GM23248 (cell line): ENCODE measurements at regions of chr18 and their contacts with region 1.

Region 1: DNA sequence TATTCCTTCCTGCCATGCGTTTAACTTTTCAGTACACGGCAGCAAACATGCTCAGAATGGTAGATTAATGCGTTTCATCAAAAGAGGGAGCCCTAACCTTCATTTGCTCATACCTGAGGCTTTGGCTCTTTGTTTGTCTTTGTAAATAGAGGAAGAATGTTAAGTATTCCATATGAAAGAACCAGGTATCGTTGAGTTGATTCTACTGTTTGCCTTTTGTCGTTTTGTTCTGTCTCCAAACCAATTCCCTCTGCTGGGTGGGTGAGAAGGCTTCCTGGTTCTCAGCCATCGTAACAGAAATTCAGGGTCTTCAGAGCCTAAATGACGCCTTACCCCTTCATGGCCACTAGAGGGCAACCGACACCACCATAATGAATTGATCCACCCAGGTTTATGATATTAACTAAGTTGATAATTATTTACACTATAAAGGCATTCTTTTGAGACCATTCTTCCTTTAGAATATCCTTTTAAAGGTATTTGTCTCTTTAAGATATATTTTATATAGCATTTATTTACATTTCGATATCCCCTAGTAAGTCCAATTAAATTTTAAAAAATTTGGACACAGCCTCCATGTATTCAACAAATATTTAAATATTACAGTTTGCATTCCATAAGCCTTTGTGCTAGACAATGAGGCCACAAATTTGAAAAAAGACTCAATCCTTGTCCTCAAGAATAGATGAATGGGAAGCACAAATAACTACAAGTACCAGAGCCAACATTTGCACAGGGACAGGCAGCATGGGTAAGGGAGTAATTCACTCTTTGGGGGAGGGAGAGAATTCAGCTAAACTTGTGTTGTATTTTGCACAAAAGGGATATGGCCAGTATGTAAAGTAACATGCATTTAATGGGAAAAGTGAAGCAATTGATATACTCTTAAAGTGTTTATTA is 48.1 kb downstream of the TIMM21 start:
- DNase-seq: peak; percentile 61
- H3K4me3 ChIP-seq: peak overlapping the region; percentile 60
- H3K27ac ChIP-seq: no peak overlapping the region
- H3K4me1 ChIP-seq: no peaks in the 10 kb centered on the region
- H3K27me3 ChIP-seq: peaks cover 12% of the 10 kb centered on the region

Region 2: DNA sequence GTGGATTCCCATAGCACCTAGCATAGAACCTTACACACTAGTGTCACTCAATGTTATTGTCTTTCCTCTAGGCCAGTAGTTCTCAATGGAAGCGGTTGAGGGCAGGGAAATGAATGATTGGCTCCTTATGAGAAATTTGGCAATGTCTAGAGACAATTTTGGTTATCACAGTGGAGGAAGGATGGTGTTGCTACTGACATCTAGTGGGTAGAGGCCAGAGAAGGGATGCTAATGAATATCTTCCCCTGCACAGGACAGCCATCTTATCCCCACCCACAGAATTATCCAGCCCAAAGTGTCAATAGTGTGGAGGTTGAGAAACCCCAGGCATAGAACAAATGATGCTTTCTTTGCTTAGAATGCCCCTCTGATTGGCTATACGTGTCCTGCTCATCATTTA is 134.9 kb after region 1 on chr18:
- in situ Hi-C with region 1: loop called (anchors 5 kb)
- DNase-seq: peak; percentile 71
- H3K4me3 ChIP-seq: no peak overlapping the region
- H3K27ac ChIP-seq: no peak overlapping the region
- H3K4me1 ChIP-seq: 0 out of 2 replicates have a peak, but pooled peaks cover 3% of the 10 kb centered on the region
- H3K27me3 ChIP-seq: no peaks in the 10 kb centered on the region

Region 3: GRCh38 chr18:74342416-74343043 is 146.1 kb after region 1 on chr18:
- in situ Hi-C with region 1: no loop called
- DNase-seq: peak; percentile 73
- H3K4me3 ChIP-seq: no peak overlapping the region
- H3K27ac ChIP-seq: no peak overlapping the region
- H3K4me1 ChIP-seq: no peaks in the 10 kb centered on the region
- H3K27me3 ChIP-seq: no peaks in the 10 kb centered on the region

Region 4: DNA sequence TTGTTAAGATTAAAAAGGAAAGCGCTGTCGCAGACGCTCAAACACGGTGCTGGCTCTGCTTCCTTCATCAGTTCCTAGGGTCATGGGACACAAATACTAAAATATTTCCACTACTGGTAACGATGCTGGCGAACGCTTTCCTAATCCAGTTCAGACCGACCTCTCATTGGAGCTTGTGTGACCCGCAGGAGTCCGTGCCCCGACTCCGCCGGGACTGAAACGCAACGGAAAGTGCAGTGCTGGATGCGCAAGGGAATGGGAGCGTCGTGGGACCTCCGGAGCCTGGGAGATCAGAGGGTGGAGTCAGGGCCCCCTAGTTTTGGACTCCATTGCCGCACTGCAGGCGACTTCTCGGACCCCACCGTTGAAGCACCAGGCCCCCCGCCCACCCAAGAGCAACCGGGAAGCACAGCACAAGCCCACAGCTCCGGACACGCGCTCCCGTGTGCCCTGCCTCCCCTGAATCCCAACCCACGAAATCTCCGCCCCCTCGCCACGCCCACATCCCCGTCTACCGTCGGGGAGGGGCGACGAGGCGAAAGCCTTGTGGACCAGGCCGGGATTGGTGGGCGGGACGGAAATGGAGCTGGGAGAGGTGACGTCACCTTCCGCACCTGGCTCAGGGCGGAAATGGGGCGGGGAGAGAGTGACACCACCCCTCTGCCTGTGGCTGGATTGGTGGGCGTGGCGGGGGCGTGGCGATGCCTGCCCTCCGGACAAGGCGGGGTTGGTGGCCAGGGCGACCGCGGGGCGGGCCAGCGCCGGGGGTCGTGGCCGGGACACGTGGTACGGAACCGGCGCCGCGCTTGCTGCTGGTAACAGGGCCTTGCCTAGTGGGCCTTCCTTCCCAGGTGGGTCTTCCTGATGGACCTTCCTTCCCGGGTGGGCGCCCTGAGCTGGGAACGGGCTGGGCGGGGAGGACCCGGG is 299.4 kb after region 1 on chr18 and contains the start of gene CNDP2:
- in situ Hi-C with region 1: loop called (anchors 25 kb)
- DNase-seq: peak; percentile 100
- H3K4me3 ChIP-seq: peak within 1 kb of the TSS; percentile 91
- H3K27ac ChIP-seq: peak within 1 kb of the TSS; percentile 74
- H3K4me1 ChIP-seq: peaks cover 24% of the 10 kb centered on the region; the same call in 1 of the 2 replicates
- H3K27me3 ChIP-seq: no peaks in the 10 kb centered on the region
- total RNA-seq, gene CNDP2: 40.5 and 46.4 TPM in 2 replicates

Region 5: DNA sequence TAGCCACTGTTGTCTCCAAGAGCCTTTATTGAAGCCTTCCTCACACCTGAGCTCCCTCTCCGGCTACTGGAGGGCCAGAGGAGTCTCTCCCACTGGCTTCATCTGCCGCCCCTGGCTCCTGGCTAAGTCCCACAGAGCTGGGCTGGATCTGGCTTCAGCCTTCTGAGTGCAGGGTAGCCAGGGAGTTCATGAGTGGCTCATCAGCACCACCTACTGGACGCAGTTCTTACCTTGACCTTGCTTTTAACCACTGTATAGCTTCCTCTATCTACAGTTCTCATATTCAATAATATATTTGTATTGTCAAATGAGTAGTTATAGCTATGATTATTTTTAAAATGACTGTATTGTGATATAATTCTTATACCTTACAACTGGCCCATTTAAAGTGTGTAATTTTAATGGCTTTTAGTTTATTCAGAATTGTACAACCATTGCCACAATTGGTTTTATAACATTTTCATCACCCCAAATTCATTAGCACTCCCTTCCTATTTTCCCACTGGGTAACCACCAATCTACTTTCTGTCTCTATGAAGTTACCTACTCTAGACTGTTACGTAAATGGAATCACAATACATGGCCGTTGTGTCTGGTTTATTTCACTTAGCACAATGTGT is 355.6 kb after region 1 on chr18:
- in situ Hi-C with region 1: loop called (anchors 25 kb)
- DNase-seq: peak; percentile 88
- H3K4me3 ChIP-seq: no peak overlapping the region
- H3K27ac ChIP-seq: no peak overlapping the region
- H3K4me1 ChIP-seq: peaks cover 4% of the 10 kb centered on the region
- H3K27me3 ChIP-seq: peaks cover 19% of the 10 kb centered on the region; the same call in 1 of the 2 replicates

Region 6: GRCh38 chr18:74760446-74760845 is 564.0 kb after region 1 on chr18:
- in situ Hi-C with region 1: no loop called
- DNase-seq: no peak
- H3K4me3 ChIP-seq: no peak overlapping the region
- H3K27ac ChIP-seq: no peak overlapping the region
- H3K4me1 ChIP-seq: no peaks in the 10 kb centered on the region
- H3K27me3 ChIP-seq: no peaks in the 10 kb centered on the region